Caki2 (cell line): ENCODE measurements at regions of chr1 and their contacts with region 1.

Region 1: DNA sequence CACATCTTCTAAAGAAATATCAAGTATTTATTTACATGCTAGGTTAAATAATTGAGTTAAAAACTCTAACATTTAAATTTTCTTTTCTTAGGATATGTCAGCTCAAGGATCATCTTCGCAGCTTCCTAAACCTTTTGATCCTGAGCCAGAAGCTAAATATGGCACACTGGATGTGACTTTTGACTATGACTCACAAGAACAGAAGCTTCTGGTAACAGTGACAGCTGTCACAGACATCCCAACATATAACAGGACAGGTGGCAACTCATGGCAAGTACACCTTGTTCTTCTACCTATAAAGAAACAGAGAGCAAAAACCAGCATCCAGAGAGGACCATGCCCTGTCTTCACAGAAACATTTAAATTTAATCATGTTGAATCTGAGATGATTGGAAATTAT is 132.7 kb upstream of the SERTAD4 start:
- DNase-seq: no peak

Region 2: GRCh38 chr1:210049616-210050015 is 50.3 kb before region 1 on chr1:
- in situ Hi-C with region 1: loop called (anchors 5 kb)
- DNase-seq: no peak

Region 3: GRCh38 chr1:210292231-210292871 is 192.4 kb after region 1 on chr1:
- in situ Hi-C with region 1: no loop called
- DNase-seq: no peak

Region 4: GRCh38 chr1:210448297-210448892 is 348.5 kb after region 1 on chr1:
- in situ Hi-C with region 1: no loop called
- DNase-seq: peak; percentile 53